Mammary epithelial cell (primary cell): ENCODE measurements at regions of chr1 and their contacts with region 1.

Region 1: DNA sequence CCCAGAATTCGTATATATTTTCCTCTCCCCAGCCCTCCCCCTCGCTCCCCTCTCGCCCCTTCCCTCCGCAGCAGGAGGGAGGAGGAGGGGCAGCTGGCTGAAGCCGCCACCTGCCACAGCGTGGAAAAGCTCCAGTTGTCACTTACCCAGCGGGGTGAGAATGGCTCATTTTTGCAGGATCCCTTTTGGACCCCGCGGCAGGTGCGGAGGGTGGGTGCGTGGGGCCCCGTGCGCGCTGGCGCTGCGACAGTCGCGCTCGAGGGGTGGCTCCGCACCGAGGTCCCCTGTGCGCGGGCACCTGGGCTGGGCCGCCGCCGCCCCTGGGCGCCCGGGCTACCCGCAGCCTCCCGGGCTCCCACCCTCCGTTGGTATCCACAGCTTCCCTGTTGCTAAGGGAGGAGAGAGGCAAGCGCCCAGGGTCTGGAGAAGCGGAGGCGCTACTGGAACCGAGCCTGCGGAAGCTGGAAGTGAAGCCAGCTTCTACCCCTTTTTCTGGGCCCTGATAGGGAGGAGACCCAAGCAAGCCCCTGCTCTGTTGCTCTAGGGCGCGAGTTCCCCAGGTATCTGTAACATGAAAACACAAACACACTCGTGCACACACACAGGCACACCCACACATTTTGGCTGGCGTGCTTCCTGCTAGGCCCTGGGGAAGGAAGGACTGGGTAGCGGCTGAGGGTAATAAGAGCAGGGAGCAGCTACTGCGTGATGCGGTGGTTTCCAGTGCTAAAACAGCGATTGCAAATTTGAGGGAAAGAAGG is at the start of gene ERICH3:
- DNase-seq: peak; percentile 5
- H3K4me3 ChIP-seq: no peak within 1 kb of the TSS
- H3K27ac ChIP-seq: no peak within 1 kb of the TSS
- H3K4me1 ChIP-seq: no peaks in the 10 kb centered on the region
- H3K27me3 ChIP-seq: peaks cover 2% of the 10 kb centered on the region
- CTCF ChIP-seq: no peak
- total RNA-seq, gene ERICH3: not detected

Region 2: DNA sequence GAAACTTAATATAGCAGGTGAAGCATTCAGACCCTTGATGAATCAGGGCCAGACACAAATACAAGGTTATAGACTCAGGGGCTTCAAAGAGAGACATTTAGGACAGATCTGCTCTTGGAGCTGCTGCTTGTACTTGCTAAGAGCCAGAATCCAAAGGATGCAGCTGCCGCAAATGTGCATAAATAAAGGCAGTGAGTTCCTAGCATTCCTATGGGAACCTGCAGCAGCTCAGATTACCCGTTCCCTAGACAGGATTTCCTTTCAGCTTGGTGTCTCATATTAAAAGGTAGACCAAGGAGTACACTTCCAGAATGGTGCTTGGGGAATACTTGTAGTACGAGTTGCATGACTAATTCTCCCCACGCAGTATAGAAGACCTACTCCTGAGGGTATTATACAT is 151.4 kb before region 1 on chr1:
- CTCF ChIA-PET with region 1: no interaction called
- dilution Hi-C with region 1: no loop called
- in situ Hi-C with region 1: no loop called
- intact Hi-C with region 1: loop called (anchors 5 kb)
- DNase-seq: no peak
- H3K4me3 ChIP-seq: no peak overlapping the region
- H3K27ac ChIP-seq: no peak overlapping the region
- H3K4me1 ChIP-seq: no peaks in the 10 kb centered on the region
- H3K27me3 ChIP-seq: no peaks in the 10 kb centered on the region
- CTCF ChIP-seq: no peak

Region 3: DNA sequence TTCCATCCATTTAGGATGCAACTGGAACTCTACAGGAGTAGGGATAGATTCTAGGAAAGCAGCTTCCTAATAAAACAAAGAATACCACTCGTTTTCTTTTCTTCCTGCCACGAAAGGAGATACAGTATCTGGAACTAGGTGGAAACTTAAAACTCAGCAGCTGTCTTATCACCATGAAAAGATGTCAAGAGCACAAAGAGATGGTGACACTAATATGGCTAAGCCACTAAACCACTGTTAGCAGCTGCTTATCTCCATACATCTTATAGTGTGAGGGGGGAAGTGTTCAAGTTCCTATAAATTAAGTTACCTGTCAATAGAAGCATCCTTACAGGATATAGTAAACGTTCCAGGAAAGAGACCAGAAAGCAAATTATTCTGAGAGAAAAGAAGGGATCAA is 221.9 kb after region 1 on chr1:
- CTCF ChIA-PET with region 1: no interaction called
- dilution Hi-C with region 1: no loop called
- in situ Hi-C with region 1: no loop called
- intact Hi-C with region 1: no loop called
- DNase-seq: no peak
- H3K4me3 ChIP-seq: no peak overlapping the region
- H3K27ac ChIP-seq: no peak overlapping the region
- H3K4me1 ChIP-seq: no peaks in the 10 kb centered on the region
- H3K27me3 ChIP-seq: no peaks in the 10 kb centered on the region
- CTCF ChIP-seq: no peak